ENCODE measurements at regions of chr9 and their contacts with region 1.

Region 1: DNA sequence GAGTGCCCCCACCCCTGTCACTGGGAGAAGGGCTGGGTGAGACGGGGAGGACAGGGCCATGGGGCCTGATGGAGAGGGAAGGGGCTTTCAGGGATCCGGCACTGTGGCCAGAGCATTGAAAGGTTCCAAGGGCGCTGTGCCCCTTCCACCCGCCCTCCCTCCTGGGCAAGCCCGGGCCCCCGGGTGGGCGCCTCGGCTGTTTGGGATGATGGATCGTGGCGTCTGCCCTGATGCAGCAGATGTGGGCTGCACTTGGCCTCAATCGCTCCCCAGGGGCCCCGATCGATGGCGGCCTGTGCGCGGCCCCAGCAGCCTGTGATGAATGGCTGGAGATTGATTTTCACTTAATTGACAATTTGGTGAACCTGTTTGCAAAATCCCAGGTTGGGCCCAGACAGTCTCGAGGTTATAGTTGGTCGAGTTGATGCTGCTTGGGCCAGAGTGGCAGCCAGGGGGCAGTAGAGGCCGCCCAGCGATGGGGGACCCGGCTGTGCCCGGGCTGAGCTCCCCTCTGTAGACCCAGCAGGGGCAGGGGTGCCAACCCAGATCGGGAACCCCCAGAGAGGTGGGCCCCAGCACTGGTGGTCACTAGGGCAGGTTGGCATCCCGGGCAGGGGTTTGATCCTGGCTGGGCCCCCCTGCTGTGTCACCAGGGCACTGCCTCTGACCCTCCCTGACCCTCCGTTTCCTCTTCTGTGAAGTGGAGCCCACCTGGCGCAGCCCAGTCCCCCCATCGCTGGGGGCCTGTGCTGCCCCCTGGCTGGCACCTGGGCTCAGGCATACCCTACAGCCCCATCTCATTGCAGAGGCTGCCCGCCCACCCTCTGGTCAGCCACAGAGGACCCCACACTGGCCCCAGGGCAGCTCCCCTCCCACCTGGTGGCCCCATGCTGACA is 34.7 kb downstream of the LHX3 start:
- DNase-seq: peak; percentile 23 to 64 (median 51)
- H3K4me3 ChIP-seq: no peak overlapping the region
- H3K27ac ChIP-seq: no peak overlapping the region
- H3K4me1 ChIP-seq: no peaks in the 10 kb centered on the region
- H3K27me3 ChIP-seq: peaks cover 22% of the 10 kb centered on the region
- CTCF ChIP-seq: peak; percentile 58 to 81 (median 72)
- POLR2A ChIP-seq: no peak

Region 2: DNA sequence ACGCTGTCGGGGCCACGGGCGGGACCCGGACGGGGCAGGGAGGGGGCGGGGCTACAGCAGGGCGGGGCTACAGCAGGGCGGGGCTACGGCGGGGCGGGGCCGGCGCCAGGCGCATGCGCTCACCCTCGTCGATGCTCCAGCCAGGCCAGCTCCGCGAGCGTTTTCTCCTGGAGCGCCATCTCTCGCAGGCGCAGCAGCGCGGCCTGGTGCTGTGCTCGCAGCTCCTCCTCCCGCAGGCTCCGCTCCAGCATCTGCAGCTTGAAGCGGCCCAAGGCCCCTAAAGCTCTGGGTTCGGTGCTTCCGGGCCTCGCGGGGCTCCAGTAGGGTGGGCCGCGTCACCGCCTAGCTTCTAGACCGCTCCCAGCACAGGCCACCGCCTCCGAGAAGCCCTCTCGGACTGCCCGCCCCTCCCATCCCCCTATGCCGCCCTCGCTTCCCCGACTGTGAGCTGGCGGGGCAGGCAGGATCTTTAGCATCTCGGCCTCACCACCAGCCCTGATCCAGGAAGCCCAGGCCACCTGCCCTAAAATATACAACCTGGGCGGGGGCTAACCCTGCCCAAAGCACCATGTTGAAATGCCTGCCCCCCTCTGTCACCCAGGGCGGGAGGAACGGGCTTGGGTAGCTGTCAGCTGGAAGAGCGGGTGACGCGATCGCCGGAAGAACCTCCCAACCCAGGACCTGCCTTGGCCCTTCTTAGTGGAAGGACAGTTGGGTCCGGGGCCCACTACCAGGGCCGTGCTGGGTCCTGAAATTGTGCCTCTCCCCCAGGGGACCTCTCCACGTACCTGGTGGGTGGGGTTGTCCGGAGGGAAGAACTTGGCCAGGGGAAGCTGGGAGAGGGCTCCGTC is 97.2 kb after region 1 on chr9:
- intact Hi-C with region 1: loop called in 1 of 2 experiments (anchors 5 kb)
- DNase-seq: peak; percentile 86 to 92 (median 89)
- H3K4me3 ChIP-seq: peak overlapping the region in 2 of 4 donors; percentile 27 to 46
- H3K27ac ChIP-seq: peak overlapping the region in 1 of 5 donors; percentile 6
- H3K4me1 ChIP-seq: peaks cover 0 to 4% of the 10 kb centered on the region in 2 donors
- H3K27me3 ChIP-seq: no peaks in the 10 kb centered on the region
- CTCF ChIP-seq: peak in 4 of 6 experiments; percentile 21 to 28 (median 26)
- POLR2A ChIP-seq: peak; percentile 13 to 54

Region 3: GRCh38 chr9:136283291-136284235 is 113.3 kb after region 1 on chr9:
- intact Hi-C with region 1: loop called (anchors 2 to 10 kb)
- DNase-seq: peak; percentile 75 to 88 (median 79)
- H3K4me3 ChIP-seq: peak overlapping the region in 1 of 4 donors; percentile 9
- H3K27ac ChIP-seq: no peak overlapping the region
- H3K4me1 ChIP-seq: no peaks in the 10 kb centered on the region
- H3K27me3 ChIP-seq: peaks cover 15% of the 10 kb centered on the region
- CTCF ChIP-seq: peak; percentile 75 to 91 (median 83)
- POLR2A ChIP-seq: no peak

Region 4: GRCh38 chr9:136631038-136632000 is 461.1 kb after region 1 on chr9:
- intact Hi-C with region 1: no loop called
- DNase-seq: peak; percentile 75 to 89 (median 83)
- H3K4me3 ChIP-seq: no peak overlapping the region
- H3K27ac ChIP-seq: no peak overlapping the region
- H3K4me1 ChIP-seq: peaks cover 0 to 5% of the 10 kb centered on the region in 2 donors
- H3K27me3 ChIP-seq: no peaks in the 10 kb centered on the region
- CTCF ChIP-seq: peak; percentile 56 to 99 (median 86)
- POLR2A ChIP-seq: no peak

Measured in adrenal gland (tissue), 19 donors.